Activated CD8-positive, alpha-beta T cell treated with anti-CD3 and anti-CD28 coated beads, Interleukin-2, amount 10 ng/mL, durations not matched to agents 7 days and 5 days (primary cell): ENCODE measurements at regions of chr22 and their contacts with region 1.

Region 1: GRCh38 chr22:31661851-31662656 is at the start of gene PISD:
- DNase-seq: peak; percentile 97
- ATAC-seq: peak; percentile 93
- H3K4me3 Mint-ChIP-seq: peak within 1 kb of the TSS; percentile 90
- H3K27ac Mint-ChIP-seq: peak within 1 kb of the TSS; percentile 92
- H3K4me1 Mint-ChIP-seq: peaks cover 29% of the 10 kb centered on the region
- H3K27me3 Mint-ChIP-seq: no peaks in the 10 kb centered on the region
- total RNA-seq, gene PISD: 28.8 to 29.2 TPM

Region 2: GRCh38 chr22:31361743-31362142 is 300.3 kb before region 1 on chr22:
- CTCF ChIA-PET with region 1: no interaction called
- POLR2A ChIA-PET with region 1: no interaction called
- DNase-seq: no peak
- ATAC-seq: no peak
- H3K4me3 Mint-ChIP-seq: no peak overlapping the region
- H3K27ac Mint-ChIP-seq: no peak overlapping the region
- H3K4me1 Mint-ChIP-seq: no peaks in the 10 kb centered on the region
- H3K27me3 Mint-ChIP-seq: no peaks in the 10 kb centered on the region

Region 3: GRCh38 chr22:31566484-31566883 is 95.6 kb before region 1 on chr22:
- CTCF ChIA-PET with region 1: no interaction called
- POLR2A ChIA-PET with region 1: no interaction called
- DNase-seq: no peak
- ATAC-seq: no peak
- H3K4me3 Mint-ChIP-seq: no peak overlapping the region
- H3K27ac Mint-ChIP-seq: no peak overlapping the region
- H3K4me1 Mint-ChIP-seq: peaks cover 7% of the 10 kb centered on the region
- H3K27me3 Mint-ChIP-seq: no peaks in the 10 kb centered on the region

Region 4: DNA sequence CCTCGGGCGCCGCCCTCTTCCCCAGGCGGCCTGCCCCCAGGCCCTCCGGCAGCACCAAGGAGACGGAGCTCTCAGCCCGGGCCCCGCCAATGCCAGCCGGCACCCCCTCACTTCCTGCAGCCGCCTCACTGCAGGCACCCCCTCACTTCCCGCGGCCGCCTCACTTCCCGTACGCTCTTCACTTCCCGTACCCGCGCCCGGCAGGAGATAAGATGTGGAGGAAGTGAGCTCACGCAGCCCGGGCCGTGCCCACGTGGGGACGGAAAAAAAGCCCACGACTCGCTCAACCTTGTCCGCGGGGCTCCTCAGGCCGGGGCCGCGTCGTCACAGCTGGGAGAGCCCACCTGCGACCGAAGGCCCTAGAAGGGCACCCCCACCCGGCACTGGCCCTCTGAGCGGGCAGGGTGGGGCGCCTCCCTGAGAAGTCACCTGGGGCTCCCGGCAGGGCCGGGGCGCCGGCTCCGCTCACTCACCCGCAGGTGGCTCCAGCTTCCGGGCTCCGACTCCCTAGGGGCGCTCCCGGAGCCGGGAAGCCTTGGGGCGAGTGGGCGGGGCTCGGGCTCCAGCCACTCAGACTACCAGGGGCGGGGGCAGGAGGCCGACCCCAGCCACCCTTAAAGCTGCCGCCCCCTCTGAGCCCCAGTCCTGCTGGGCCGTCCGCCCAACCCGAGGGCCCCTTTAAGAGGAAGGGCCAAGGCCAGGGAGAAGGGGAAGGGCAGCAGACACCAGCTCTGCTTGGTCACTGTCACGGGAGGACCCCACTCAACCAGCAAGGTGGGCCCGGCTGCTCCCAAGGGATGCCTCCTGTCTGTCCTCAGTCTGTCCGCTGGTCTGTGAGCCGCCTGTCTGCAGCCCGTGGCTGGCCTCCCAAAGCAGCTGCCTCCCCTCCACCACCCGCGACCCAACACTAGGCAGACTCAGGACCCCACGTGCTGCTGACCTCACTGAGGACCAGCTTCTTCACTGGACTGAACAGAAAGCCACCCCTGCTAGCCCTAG is 31.4 kb before region 1 on chr22:
- CTCF ChIA-PET with region 1: interaction called, 5 read pairs
- POLR2A ChIA-PET with region 1: interaction called, 11 read pairs
- DNase-seq: peak; percentile 93
- ATAC-seq: peak; percentile 89
- H3K4me3 Mint-ChIP-seq: peak overlapping the region; percentile 83
- H3K27ac Mint-ChIP-seq: peak overlapping the region; percentile 96
- H3K4me1 Mint-ChIP-seq: peaks cover 42% of the 10 kb centered on the region
- H3K27me3 Mint-ChIP-seq: no peaks in the 10 kb centered on the region

Region 5: DNA sequence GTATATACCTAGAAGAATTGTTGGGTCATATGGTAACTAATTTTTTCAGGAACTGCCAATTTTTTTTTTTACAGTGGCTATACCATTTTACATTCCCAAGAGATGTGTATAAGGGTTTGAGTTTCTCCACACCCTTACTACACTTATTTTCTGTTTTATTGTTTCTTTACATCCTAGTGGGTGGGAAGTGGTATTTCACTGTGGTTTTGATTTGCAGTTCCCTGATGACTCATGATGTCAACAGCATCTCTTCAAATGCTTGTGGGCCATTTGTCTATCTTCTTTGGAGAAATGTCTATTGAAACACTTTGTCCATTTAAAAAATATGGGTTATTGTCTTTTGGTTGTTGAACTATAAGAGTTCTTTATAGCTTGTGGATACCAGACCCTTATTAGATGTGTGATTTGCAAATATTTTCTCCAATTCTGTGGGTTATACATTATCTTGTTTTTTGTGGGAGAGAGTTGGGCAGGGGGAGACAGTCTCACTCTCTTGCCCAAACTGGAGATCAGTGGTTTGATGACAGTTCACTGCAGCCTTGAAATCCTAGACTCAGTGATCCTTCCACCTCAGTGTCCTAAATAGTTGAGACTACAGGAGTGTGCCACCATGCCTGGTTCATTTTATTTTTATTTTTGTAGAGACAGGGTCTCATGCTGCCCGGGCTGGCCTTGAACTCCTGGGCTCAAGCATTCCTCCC is 30.3 kb after region 1 on chr22:
- CTCF ChIA-PET with region 1: interaction called, 11 read pairs
- POLR2A ChIA-PET with region 1: interaction called, 3 read pairs
- DNase-seq: peak; percentile 59
- ATAC-seq: peak; percentile 90
- H3K4me3 Mint-ChIP-seq: no peak overlapping the region
- H3K27ac Mint-ChIP-seq: peak overlapping the region; percentile 58
- H3K4me1 Mint-ChIP-seq: peaks cover 38% of the 10 kb centered on the region
- H3K27me3 Mint-ChIP-seq: no peaks in the 10 kb centered on the region

Region 6: GRCh38 chr22:31943976-31944699 is 282.1 kb after region 1 on chr22 and contains the start of gene YWHAH:
- CTCF ChIA-PET with region 1: interaction called, 89 read pairs
- POLR2A ChIA-PET with region 1: no interaction called
- DNase-seq: peak; percentile 96
- ATAC-seq: peak; percentile 79
- H3K4me3 Mint-ChIP-seq: peak within 1 kb of the TSS; percentile 93
- H3K27ac Mint-ChIP-seq: peak within 1 kb of the TSS; percentile 97
- H3K4me1 Mint-ChIP-seq: peaks cover 35% of the 10 kb centered on the region
- H3K27me3 Mint-ChIP-seq: no peaks in the 10 kb centered on the region
- total RNA-seq, gene YWHAH: 248 to 251 TPM

Region 7: GRCh38 chr22:31970490-31971444 is 308.7 kb after region 1 on chr22:
- CTCF ChIA-PET with region 1: interaction called, 43 read pairs
- POLR2A ChIA-PET with region 1: interaction called, 3 read pairs
- DNase-seq: peak; percentile 86
- ATAC-seq: peak; percentile 95
- H3K4me3 Mint-ChIP-seq: peak overlapping the region; percentile 75
- H3K27ac Mint-ChIP-seq: peak overlapping the region; percentile 8
- H3K4me1 Mint-ChIP-seq: peaks cover 15% of the 10 kb centered on the region
- H3K27me3 Mint-ChIP-seq: no peaks in the 10 kb centered on the region